HepG2 (cell line): ENCODE measurements at regions of chr15 and their contacts with region 1.

Region 1: DNA sequence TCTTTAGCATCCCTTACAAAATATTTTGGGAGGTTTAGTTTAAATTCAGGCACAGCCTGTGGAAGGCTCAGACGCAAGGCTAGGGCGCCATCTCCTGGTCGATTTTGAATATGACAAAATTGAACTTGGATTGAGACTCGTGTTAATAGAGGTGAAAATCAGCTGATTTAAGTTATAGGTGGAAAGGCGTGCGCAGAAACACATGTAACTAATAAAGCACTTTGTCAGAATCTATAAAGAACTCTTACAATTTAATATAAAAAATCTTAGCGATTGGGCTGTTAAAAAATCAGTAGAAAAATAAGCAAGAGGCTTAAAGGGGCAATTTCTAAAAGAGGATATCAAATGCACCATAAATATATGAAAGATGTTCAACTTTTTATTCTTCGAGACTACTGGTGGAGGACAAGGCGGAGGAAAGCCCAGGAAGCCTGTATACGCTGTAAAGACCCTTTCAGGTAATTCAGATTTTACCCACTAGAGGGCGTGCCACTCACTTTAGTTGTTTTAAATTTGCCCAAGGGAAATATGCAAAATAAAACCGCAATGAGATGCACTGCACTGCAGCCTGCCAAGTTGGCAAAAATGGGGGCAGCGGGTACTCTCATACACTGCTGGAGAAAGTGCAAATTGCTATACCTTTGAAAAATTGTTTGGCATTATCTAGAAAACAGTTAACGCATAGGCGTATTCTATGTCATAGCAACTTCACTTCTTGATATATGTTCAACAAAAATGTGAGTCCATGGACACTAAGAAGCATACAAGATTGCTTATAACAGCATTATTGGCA is 64.7 kb downstream of the SLC30A4 start:
- DNase-seq: peak; percentile 77
- ATAC-seq: peak; percentile 72
- H3K4me3 ChIP-seq: peak overlapping the region; percentile 46 to 67 (median 61)
- H3K27ac ChIP-seq: peak overlapping the region; percentile 25
- H3K4me1 ChIP-seq: peaks cover 37% of the 10 kb centered on the region
- H3K27me3 ChIP-seq: peaks cover 5 to 24% of the 10 kb centered on the region in 2 experiments; a peak in 4 of 5 replicates
- CTCF ChIP-seq: peak; percentile 70
- EP300 ChIP-seq: no peak
- POLR2A ChIP-seq: no peak
- RAD21 ChIP-seq: peak; percentile 58

Region 2: DNA sequence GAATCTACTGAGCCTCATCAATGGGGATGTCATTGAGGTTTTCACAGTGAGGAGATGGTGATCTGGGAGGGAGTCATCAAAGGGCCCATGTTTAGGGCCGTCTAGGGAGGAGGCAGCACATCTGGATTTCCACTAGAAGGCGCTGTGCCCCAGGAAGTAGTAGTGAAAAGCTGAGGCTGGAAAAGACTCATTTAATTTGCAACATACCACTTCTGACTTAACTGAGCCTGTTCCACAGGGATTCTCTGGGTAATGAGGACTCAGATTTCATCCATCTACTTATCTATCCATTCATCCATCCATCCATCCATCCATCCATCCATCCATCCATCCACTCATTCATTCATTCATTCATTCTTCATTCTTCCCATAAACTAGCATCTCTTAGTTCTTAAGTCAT is 252.6 kb before region 1 on chr15:
- CTCF ChIA-PET with region 1: interaction called, 7 read pairs
- POLR2A ChIA-PET with region 1: no interaction called
- in situ Hi-C with region 1: no loop called
- intact Hi-C with region 1: loop called (anchors 2 kb)
- DNase-seq: peak; percentile 67
- ATAC-seq: peak; percentile 46
- H3K4me3 ChIP-seq: no peak overlapping the region
- H3K27ac ChIP-seq: no peak overlapping the region
- H3K4me1 ChIP-seq: peaks cover 34% of the 10 kb centered on the region
- H3K27me3 ChIP-seq: no peaks in the 10 kb centered on the region; a peak in 2 of 5 replicates
- CTCF ChIP-seq: peak; percentile 85
- EP300 ChIP-seq: no peak
- POLR2A ChIP-seq: no peak
- RAD21 ChIP-seq: peak; percentile 77

Region 3: DNA sequence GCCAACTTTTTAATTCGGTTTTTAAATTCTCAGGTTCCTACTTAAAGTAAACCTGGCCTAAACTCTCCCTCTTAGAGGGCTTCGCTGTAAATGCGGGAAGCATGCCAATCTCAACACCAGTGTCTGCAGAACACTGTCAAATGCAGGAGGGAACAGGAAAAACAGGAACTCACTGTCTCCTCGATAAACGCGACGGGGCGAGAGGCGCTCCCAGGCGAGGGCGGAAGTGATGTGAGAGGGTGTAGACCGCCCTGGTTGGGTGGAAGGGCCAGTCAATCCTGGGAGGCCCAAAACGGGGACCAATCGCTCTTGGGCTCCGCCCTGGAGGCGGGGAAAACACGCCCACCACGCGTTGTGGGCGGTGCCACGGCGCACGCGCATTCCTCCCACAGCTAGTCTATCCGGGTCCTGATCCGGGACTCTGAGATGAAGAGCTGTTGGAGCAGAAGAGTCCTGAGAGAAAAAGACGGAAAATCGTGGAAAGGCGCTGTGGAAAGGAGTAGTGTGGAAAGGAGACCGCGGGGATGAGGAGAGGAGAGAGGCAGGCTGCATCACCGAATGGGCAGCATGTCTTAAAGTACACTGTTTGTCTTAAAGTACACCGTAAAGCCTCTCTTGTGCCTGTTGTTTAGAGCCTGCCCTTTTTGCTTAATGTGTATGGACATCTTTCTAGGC is 178.7 kb before region 1 on chr15:
- CTCF ChIA-PET with region 1: no interaction called
- POLR2A ChIA-PET with region 1: no interaction called
- in situ Hi-C with region 1: no loop called
- intact Hi-C with region 1: no loop called
- DNase-seq: peak; percentile 97
- ATAC-seq: peak; percentile 100
- H3K4me3 ChIP-seq: peak overlapping the region; percentile 69 to 91 (median 85)
- H3K27ac ChIP-seq: peak overlapping the region; percentile 73
- H3K4me1 ChIP-seq: peaks cover 34% of the 10 kb centered on the region
- H3K27me3 ChIP-seq: no peaks in the 10 kb centered on the region
- CTCF ChIP-seq: 0 out of 2 replicates have a peak, but pooled peaks have one; percentile 8
- EP300 ChIP-seq: no peak
- POLR2A ChIP-seq: peak; percentile 81 to 86
- RAD21 ChIP-seq: no peak

Region 4: DNA sequence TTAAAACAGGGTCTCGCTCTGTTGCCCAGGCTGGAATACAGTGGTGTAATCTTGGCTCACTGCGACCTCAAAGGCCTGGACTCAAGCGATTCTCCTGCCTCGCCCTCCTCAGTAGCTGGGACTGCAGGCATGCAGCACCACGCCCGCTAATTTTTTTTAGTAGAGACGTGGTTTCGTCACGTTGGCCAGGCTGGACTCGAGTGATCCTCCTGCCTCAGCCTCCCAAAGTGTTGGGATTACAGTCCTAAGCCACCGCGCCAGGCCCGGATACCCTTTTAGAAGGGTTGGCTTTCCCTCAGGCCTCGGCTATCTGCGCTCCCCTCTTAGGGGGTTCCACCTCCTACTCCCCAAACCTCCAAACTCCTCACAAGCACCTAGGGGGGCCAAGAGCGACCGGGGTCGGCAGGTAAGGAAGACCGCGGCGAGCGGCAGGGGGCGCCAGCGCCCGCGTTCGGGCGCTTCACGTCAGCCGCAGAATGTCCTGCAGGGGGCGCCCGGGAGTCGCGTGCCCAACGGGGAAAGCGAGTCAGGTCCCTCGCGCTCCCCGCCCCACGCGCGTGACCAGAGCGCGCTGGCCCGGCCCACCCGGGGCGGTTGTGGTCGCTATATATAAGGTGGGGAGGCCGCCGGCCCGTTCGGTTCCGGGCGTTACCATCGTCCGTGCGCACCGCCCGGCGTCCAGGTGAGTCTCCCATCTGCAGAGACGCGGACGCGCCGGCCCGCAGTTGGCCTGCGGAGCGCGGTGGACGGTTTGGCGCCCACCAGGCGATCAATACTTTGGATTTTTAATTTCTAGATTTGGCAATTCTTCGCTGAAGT is 27.7 kb before region 1 on chr15:
- CTCF ChIA-PET with region 1: interaction called, 195 read pairs
- POLR2A ChIA-PET with region 1: no interaction called
- in situ Hi-C with region 1: no loop called
- intact Hi-C with region 1: loop called (anchors 1 kb)
- DNase-seq: peak; percentile 22
- ATAC-seq: peak; percentile 93
- H3K4me3 ChIP-seq: peak overlapping the region; percentile 43 to 67 (median 54); a peak in 4 of 6 replicates
- H3K27ac ChIP-seq: no peak overlapping the region
- H3K4me1 ChIP-seq: peaks cover 24% of the 10 kb centered on the region
- H3K27me3 ChIP-seq: no peaks in the 10 kb centered on the region
- CTCF ChIP-seq: peak; percentile 97
- EP300 ChIP-seq: no peak
- POLR2A ChIP-seq: no peak
- RAD21 ChIP-seq: peak; percentile 94

Region 5: DNA sequence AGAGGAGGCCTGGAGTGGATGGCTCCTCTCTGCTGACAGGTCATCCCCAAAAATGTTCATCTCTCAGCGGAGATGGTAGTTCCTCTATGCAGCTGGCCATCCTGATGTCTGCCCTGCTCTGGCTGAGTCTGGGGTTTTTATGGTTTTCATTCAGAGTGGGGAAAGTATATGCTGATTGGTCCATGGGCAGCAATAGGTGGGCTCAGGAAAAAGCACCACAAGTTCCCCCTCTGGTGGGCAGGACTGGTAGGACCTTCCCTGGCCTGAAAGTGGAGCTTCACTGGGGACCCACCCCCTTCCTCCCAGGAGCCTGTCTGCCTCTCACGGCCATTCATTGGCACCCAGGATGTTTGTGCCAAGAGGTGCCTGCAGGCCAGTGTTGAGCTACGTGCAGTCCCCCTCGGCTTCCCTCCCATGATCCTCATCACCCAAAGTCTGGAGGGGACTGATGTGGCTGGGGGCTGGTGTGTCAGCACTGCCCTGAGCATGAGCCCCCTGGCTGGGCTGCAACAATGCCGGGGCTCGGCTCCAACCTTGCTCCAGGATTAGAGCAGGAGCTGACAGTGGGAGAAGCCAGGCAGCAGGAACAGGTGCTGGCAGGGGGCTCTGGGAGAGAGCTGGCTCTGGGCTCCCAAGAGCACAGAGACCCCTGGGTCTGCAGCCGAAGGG is 116.3 kb after region 1 on chr15:
- CTCF ChIA-PET with region 1: interaction called, 9 read pairs
- POLR2A ChIA-PET with region 1: no interaction called
- in situ Hi-C with region 1: no loop called
- intact Hi-C with region 1: loop called (anchors 1 kb)
- DNase-seq: peak; percentile 61
- ATAC-seq: peak; percentile 99
- H3K4me3 ChIP-seq: peak overlapping the region in 1 of 3 experiments; percentile 63; a peak in 2 of 6 replicates
- H3K27ac ChIP-seq: no peak overlapping the region
- H3K4me1 ChIP-seq: peaks cover 13% of the 10 kb centered on the region
- H3K27me3 ChIP-seq: no peaks in the 10 kb centered on the region
- CTCF ChIP-seq: peak; percentile 74
- EP300 ChIP-seq: no peak
- POLR2A ChIP-seq: no peak
- RAD21 ChIP-seq: no peak